Body of pancreas (tissue), 4 donors: ENCODE measurements at regions of chr20 and their contacts with region 1.

Region 1: GRCh38 chr20:59217794-59218280 is 54.2 kb downstream of the ZNF831 start:
- DNase-seq: peak in 1 of 4 donors; percentile 19
- ATAC-seq: no peak
- H3K4me3 ChIP-seq: no peak overlapping the region
- H3K27ac ChIP-seq: no peak overlapping the region
- H3K4me1 ChIP-seq: peaks cover 13% of the 10 kb centered on the region
- H3K27me3 ChIP-seq: no peaks in the 10 kb centered on the region
- CTCF ChIP-seq: no peak
- POLR2A ChIP-seq: no peak

Region 2: GRCh38 chr20:59094576-59094975 is 123.3 kb before region 1 on chr20:
- intact Hi-C with region 1: loop called (anchors 10 kb)
- DNase-seq: no peak
- ATAC-seq: no peak
- H3K4me3 ChIP-seq: no peak overlapping the region
- H3K27ac ChIP-seq: no peak overlapping the region
- H3K4me1 ChIP-seq: no peaks in the 10 kb centered on the region
- H3K27me3 ChIP-seq: no peaks in the 10 kb centered on the region
- CTCF ChIP-seq: no peak
- POLR2A ChIP-seq: no peak